ENCODE measurements at regions of chr12 and their contacts with region 1.

Region 1: GRCh38 chr12:75641031-75641780 is 129.8 kb upstream of the KRR1 start:
- DNase-seq: peak; percentile 65
- ATAC-seq: peak; percentile 93
- H3K4me3 Mint-ChIP-seq: no peak overlapping the region
- H3K27ac Mint-ChIP-seq: peak overlapping the region; percentile 34
- H3K4me1 Mint-ChIP-seq: peaks cover 19% of the 10 kb centered on the region
- H3K27me3 Mint-ChIP-seq: peaks cover 11% of the 10 kb centered on the region

Region 2: GRCh38 chr12:75528272-75528671 is 112.9 kb before region 1 on chr12:
- CTCF ChIA-PET with region 1: no interaction called
- POLR2A ChIA-PET with region 1: no interaction called
- intact Hi-C with region 1: no loop called
- DNase-seq: no peak
- ATAC-seq: no peak
- H3K4me3 Mint-ChIP-seq: no peak overlapping the region
- H3K27ac Mint-ChIP-seq: no peak overlapping the region
- H3K4me1 Mint-ChIP-seq: peaks cover 6% of the 10 kb centered on the region
- H3K27me3 Mint-ChIP-seq: peaks cover 22% of the 10 kb centered on the region

Region 3: DNA sequence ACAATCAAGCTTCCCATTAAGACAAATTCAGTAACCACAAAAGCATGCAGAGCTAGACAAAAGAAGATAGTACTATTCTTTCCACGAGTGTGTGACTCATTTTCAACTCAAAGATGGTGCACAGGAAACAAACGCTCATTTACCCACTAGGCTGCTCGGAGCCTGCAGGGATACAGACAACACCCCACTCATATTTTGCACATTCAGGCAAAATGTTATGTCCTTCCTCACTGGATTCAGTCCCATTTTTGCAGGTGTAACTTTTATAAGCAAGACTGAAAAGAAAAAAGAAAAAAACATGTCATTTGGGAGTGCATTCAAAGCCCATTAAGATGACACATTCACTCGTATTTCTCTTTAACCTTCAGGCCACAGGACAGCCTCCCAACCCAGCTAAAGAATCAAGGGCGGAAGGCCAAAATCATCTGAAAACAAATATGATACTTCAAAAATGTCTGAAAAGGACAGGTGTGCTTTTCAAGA is 17.7 kb after region 1 on chr12:
- CTCF ChIA-PET with region 1: interaction called, 3 read pairs
- POLR2A ChIA-PET with region 1: no interaction called
- intact Hi-C with region 1: loop called in 1 of 2 experiments (anchors 2 kb)
- DNase-seq: peak; percentile 33
- ATAC-seq: peak; percentile 85
- H3K4me3 Mint-ChIP-seq: no peak overlapping the region
- H3K27ac Mint-ChIP-seq: no peak overlapping the region
- H3K4me1 Mint-ChIP-seq: peaks cover 14% of the 10 kb centered on the region
- H3K27me3 Mint-ChIP-seq: no peaks in the 10 kb centered on the region

Region 4: GRCh38 chr12:75722714-75723200 is 81.6 kb after region 1 on chr12:
- CTCF ChIA-PET with region 1: no interaction called
- POLR2A ChIA-PET with region 1: no interaction called
- intact Hi-C with region 1: loop called in 1 of 2 experiments (anchors 5 kb)
- DNase-seq: peak; percentile 50
- ATAC-seq: peak; percentile 97
- H3K4me3 Mint-ChIP-seq: no peak overlapping the region
- H3K27ac Mint-ChIP-seq: peak overlapping the region; percentile 78
- H3K4me1 Mint-ChIP-seq: peaks cover 14% of the 10 kb centered on the region
- H3K27me3 Mint-ChIP-seq: peaks cover 5% of the 10 kb centered on the region

Region 5: DNA sequence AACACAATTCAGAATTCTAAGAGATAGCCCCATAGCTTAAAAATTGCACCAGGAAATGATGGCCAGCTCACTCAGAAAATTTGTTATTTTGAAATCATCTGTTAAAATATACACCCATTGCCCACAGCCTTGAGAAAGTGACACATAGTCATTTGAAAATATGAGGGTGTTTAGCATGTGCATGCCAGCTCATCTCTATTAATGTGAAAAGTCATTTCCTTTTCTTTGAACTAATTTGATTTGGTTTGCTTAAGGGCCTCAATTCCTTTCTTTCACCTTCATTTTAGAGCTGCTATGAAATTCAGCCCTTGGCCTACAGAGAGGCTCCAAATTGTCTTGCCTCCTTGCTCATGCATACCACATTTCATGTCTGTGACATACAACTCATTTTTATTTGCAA is 149.0 kb after region 1 on chr12:
- CTCF ChIA-PET with region 1: no interaction called
- POLR2A ChIA-PET with region 1: no interaction called
- intact Hi-C with region 1: no loop called
- DNase-seq: no peak
- ATAC-seq: peak; percentile 93
- H3K4me3 Mint-ChIP-seq: no peak overlapping the region
- H3K27ac Mint-ChIP-seq: peak overlapping the region; percentile 29
- H3K4me1 Mint-ChIP-seq: peaks cover 23% of the 10 kb centered on the region
- H3K27me3 Mint-ChIP-seq: peaks cover 22% of the 10 kb centered on the region

Region 6: DNA sequence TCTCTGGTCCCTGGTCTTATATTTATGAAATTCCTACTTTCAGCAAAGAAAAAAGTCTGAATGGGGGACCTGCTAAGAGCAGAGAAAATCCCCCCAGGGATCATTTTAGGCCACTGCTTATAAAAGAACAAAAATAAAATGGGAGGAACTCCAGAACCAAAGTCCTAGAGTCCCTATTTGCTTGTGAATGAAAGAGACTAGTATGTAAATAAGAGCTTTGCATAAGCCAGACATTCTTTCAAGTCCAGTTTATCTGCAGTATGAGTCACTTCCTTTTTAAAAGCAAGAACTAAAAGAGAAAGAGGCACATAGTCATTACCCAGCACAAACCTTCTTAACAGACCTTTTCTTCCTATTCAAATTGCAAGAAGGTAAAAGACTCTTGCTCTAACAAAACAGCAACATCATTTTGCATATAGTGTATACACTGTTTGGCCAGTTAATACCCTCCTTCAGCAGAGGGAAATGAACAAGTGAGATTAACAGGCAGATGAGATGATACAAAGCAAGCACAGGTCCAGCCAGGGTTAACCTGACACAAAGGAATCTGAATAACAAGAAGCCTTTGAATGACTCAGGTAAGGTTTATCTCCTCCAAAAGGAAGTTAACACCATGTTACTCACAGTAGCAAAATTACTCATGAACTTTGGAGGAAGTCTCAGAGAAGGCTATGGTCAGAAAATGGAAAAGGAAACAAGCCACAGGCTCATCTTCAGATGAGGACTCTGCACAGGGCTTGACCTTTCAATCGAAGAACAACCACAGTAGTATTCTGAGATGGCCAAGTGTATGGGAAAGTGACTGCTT is 303.1 kb after region 1 on chr12:
- CTCF ChIA-PET with region 1: interaction called, 4 read pairs
- POLR2A ChIA-PET with region 1: no interaction called
- intact Hi-C with region 1: loop called in 1 of 2 experiments (anchors 2 kb)
- DNase-seq: peak; percentile 42
- ATAC-seq: peak; percentile 92
- H3K4me3 Mint-ChIP-seq: peak overlapping the region; percentile 37
- H3K27ac Mint-ChIP-seq: peak overlapping the region; percentile 90
- H3K4me1 Mint-ChIP-seq: peaks cover 31% of the 10 kb centered on the region
- H3K27me3 Mint-ChIP-seq: no peaks in the 10 kb centered on the region

Region 7: GRCh38 chr12:75994186-75994731 is 353.1 kb after region 1 on chr12:
- CTCF ChIA-PET with region 1: no interaction called
- POLR2A ChIA-PET with region 1: no interaction called
- intact Hi-C with region 1: loop called in 1 of 2 experiments (anchors 2 kb)
- DNase-seq: peak; percentile 53
- ATAC-seq: peak; percentile 86
- H3K4me3 Mint-ChIP-seq: no peak overlapping the region
- H3K27ac Mint-ChIP-seq: peak overlapping the region; percentile 34
- H3K4me1 Mint-ChIP-seq: peaks cover 26% of the 10 kb centered on the region
- H3K27me3 Mint-ChIP-seq: peaks cover 7% of the 10 kb centered on the region

Region 8: GRCh38 chr12:76976777-76977382 is 1335.7 kb after region 1 on chr12:
- CTCF ChIA-PET with region 1: no interaction called
- POLR2A ChIA-PET with region 1: no interaction called
- intact Hi-C with region 1: no loop called
- DNase-seq: no peak
- ATAC-seq: no peak
- H3K4me3 Mint-ChIP-seq: no peak overlapping the region
- H3K27ac Mint-ChIP-seq: no peak overlapping the region
- H3K4me1 Mint-ChIP-seq: peaks cover 2% of the 10 kb centered on the region
- H3K27me3 Mint-ChIP-seq: peaks cover 15% of the 10 kb centered on the region

Measured in activated CD4-positive, alpha-beta T cell treated with anti-CD3 and anti-CD28 coated beads for 36 hours (primary cell).